CD4-positive, alpha-beta T cell (primary cell): ENCODE measurements at regions of chr4 and their contacts with region 1.

Region 1: GRCh38 chr4:1899149-1900086 is 28.2 kb downstream of the NSD2 start:
- DNase-seq: peak; percentile 56 to 90 (median 63)
- ATAC-seq: peak; percentile 98
- H3K4me3 ChIP-seq: no peak overlapping the region
- H3K4me3 Mint-ChIP-seq: no peak overlapping the region
- H3K27ac ChIP-seq: no peak overlapping the region
- H3K27ac Mint-ChIP-seq: no peak overlapping the region
- H3K4me1 ChIP-seq: peaks cover 9% of the 10 kb centered on the region
- H3K4me1 Mint-ChIP-seq: peaks cover 10% of the 10 kb centered on the region
- H3K27me3 ChIP-seq: no peaks in the 10 kb centered on the region
- H3K27me3 Mint-ChIP-seq: no peaks in the 10 kb centered on the region
- CTCF ChIP-seq: peak; percentile 90

Region 2: DNA sequence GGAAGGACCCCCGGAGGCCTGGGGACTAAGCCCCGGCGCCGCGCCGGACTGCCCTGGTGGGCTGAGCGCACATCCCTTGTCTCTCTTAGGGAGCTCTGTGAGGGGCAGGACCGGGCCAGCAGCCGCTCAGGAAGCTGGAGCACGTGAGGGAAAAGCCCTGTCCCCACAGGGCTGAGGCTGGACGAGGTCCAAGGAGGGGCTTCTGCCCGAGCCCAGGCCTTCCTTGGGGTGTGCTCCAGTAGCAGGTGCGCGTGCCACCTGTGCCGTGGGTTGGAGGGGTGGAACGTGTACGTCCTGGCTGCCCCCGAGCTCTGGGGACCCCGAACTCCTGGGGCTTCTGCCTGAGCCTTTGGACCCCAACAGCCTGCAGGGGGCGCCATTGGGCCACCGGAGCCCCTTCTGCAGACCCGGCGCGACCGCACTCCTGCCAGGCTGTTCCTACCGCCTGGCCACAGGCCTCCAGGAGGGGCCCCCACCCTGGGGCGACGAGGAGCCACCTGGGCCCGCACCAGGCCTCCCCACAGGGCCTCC is 150.9 kb before region 1 on chr4:
- CTCF ChIA-PET with region 1: interaction called, 13 read pairs
- POLR2A ChIA-PET with region 1: interaction called, 3 read pairs
- intact Hi-C with region 1: loop called (anchors 1 kb)
- DNase-seq: peak; percentile 64 to 86 (median 74)
- ATAC-seq: peak; percentile 62
- H3K4me3 ChIP-seq: no peak overlapping the region
- H3K4me3 Mint-ChIP-seq: no peak overlapping the region
- H3K27ac ChIP-seq: no peak overlapping the region
- H3K27ac Mint-ChIP-seq: no peak overlapping the region
- H3K4me1 ChIP-seq: peaks cover 33% of the 10 kb centered on the region
- H3K4me1 Mint-ChIP-seq: no peaks in the 10 kb centered on the region
- H3K27me3 ChIP-seq: no peaks in the 10 kb centered on the region
- H3K27me3 Mint-ChIP-seq: no peaks in the 10 kb centered on the region
- CTCF ChIP-seq: peak; percentile 68

Region 3: GRCh38 chr4:1870578-1871443 is 28.6 kb before region 1 on chr4 and contains the start of gene NSD2:
- CTCF ChIA-PET with region 1: interaction called, 8 read pairs
- POLR2A ChIA-PET with region 1: interaction called, 7 read pairs
- intact Hi-C with region 1: loop called in 1 of 2 experiments (anchors 2 kb)
- DNase-seq: peak; percentile 80 to 97 (median 88)
- ATAC-seq: peak; percentile 63
- H3K4me3 ChIP-seq: peak within 1 kb of the TSS; percentile 63
- H3K4me3 Mint-ChIP-seq: peak within 1 kb of the TSS; percentile 92
- H3K27ac ChIP-seq: peak within 1 kb of the TSS; percentile 79 to 94
- H3K27ac Mint-ChIP-seq: peak within 1 kb of the TSS; percentile 89
- H3K4me1 ChIP-seq: peaks cover 29% of the 10 kb centered on the region
- H3K4me1 Mint-ChIP-seq: peaks cover 34% of the 10 kb centered on the region
- H3K27me3 ChIP-seq: no peaks in the 10 kb centered on the region
- H3K27me3 Mint-ChIP-seq: peaks cover 5% of the 10 kb centered on the region
- CTCF ChIP-seq: no peak
- total RNA-seq, gene NSD2: 42.4 to 45.8 TPM